H1 (cell line): ENCODE measurements at regions of chr2 and their contacts with region 1.

Region 1: GRCh38 chr2:67451086-67451832 is 54.1 kb downstream of the ETAA1 start:
- DNase-seq: no peak
- H3K4me3 ChIP-seq: no peak overlapping the region
- H3K27ac ChIP-seq: no peak overlapping the region
- H3K4me1 ChIP-seq: no peaks in the 10 kb centered on the region
- H3K27me3 ChIP-seq: no peaks in the 10 kb centered on the region
- CTCF ChIP-seq: no peak
- EP300 ChIP-seq: no peak
- POLR2A ChIP-seq: no peak
- RAD21 ChIP-seq: no peak

Region 2: GRCh38 chr2:67650291-67651133 is 199.3 kb after region 1 on chr2:
- CTCF ChIA-PET with region 1: interaction called, 12 read pairs
- POLR2A ChIA-PET with region 1: no interaction called
- DNase-seq: peak; percentile 38 to 76
- H3K4me3 ChIP-seq: no peak overlapping the region
- H3K27ac ChIP-seq: no peak overlapping the region
- H3K4me1 ChIP-seq: peaks cover 0 to 4% (median 0%) of the 10 kb centered on the region in 4 experiments; a peak in 1 of 7 replicates
- H3K27me3 ChIP-seq: no peaks in the 10 kb centered on the region
- CTCF ChIP-seq: peak; percentile 74 to 85 (median 80)
- EP300 ChIP-seq: no peak
- POLR2A ChIP-seq: no peak
- RAD21 ChIP-seq: peak; percentile 90 to 95